Activated CD4-positive, alpha-beta T cell treated with anti-CD3 and anti-CD28 coated beads for 36 hours (primary cell): ENCODE measurements at regions of chr9 and their contacts with region 1.

Region 1: DNA sequence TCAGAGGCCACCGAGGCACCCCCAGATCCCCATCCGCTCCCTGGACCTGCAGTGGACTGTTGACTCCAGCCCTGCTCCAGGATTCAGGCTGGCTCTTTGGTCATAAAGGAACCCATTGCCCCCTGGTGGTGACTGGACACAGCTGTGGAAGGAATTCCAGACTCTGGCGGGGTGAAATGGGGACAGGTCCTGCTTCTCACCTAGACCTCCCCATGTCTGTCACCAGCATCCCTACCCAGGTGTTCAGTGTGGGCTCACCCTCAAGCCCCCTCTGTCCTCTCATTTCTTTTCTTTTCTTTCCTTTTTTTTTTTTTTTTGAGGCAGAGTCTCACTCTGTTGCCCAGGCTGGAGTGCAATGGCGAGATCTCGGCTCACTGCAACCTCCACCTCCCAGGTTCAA is 25.5 kb upstream of the STXBP1 start:
- DNase-seq: peak; percentile 75
- ATAC-seq: peak; percentile 74
- H3K4me3 Mint-ChIP-seq: no peak overlapping the region
- H3K27ac Mint-ChIP-seq: no peak overlapping the region
- H3K4me1 Mint-ChIP-seq: peaks cover 4% of the 10 kb centered on the region
- H3K27me3 Mint-ChIP-seq: peaks cover 15% of the 10 kb centered on the region

Region 2: DNA sequence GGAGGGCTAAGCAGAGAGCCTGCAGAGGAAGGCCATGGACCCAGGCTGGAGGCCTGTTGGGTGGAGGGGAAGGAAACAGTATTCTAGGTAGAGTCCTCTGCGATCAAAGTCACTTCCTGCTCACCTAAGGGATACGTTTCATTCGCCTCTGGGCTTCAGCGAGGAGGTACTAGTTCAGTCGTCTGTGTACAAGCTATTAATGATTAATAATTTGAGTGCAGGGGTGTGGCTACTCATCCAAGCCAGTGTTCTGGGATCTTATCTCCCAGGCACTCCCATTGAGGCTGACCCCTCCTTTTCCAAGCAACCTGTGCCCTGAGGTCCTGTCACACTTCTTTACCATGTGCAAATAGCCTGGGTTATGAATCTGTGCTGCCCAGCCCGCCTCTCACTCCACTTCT is 646.7 kb before region 1 on chr9:
- CTCF ChIA-PET with region 1: no interaction called
- POLR2A ChIA-PET with region 1: no interaction called
- intact Hi-C with region 1: loop called in 1 of 2 experiments (anchors 2 kb)
- DNase-seq: no peak
- ATAC-seq: no peak
- H3K4me3 Mint-ChIP-seq: no peak overlapping the region
- H3K27ac Mint-ChIP-seq: no peak overlapping the region
- H3K4me1 Mint-ChIP-seq: peaks cover 4% of the 10 kb centered on the region
- H3K27me3 Mint-ChIP-seq: peaks cover 16% of the 10 kb centered on the region

Region 3: GRCh38 chr9:127503947-127504782 is 82.4 kb before region 1 on chr9:
- CTCF ChIA-PET with region 1: interaction called, 12 read pairs
- POLR2A ChIA-PET with region 1: no interaction called
- intact Hi-C with region 1: loop called (anchors 1 kb)
- DNase-seq: peak; percentile 89
- ATAC-seq: peak; percentile 90
- H3K4me3 Mint-ChIP-seq: no peak overlapping the region
- H3K27ac Mint-ChIP-seq: no peak overlapping the region
- H3K4me1 Mint-ChIP-seq: no peaks in the 10 kb centered on the region
- H3K27me3 Mint-ChIP-seq: no peaks in the 10 kb centered on the region

Region 4: GRCh38 chr9:127523312-127523851 is 63.2 kb before region 1 on chr9:
- CTCF ChIA-PET with region 1: interaction called, 5 read pairs
- POLR2A ChIA-PET with region 1: no interaction called
- intact Hi-C with region 1: loop called in 1 of 2 experiments (anchors 1 kb)
- DNase-seq: peak; percentile 64
- ATAC-seq: no peak
- H3K4me3 Mint-ChIP-seq: no peak overlapping the region
- H3K27ac Mint-ChIP-seq: no peak overlapping the region
- H3K4me1 Mint-ChIP-seq: peaks cover 2% of the 10 kb centered on the region
- H3K27me3 Mint-ChIP-seq: no peaks in the 10 kb centered on the region

Region 5: GRCh38 chr9:127869310-127870152 is 283.0 kb after region 1 on chr9:
- CTCF ChIA-PET with region 1: no interaction called
- POLR2A ChIA-PET with region 1: no interaction called
- intact Hi-C with region 1: loop called (anchors 1 to 5 kb)
- DNase-seq: peak; percentile 91
- ATAC-seq: peak; percentile 75
- H3K4me3 Mint-ChIP-seq: no peak overlapping the region
- H3K27ac Mint-ChIP-seq: no peak overlapping the region
- H3K4me1 Mint-ChIP-seq: peaks cover 16% of the 10 kb centered on the region
- H3K27me3 Mint-ChIP-seq: no peaks in the 10 kb centered on the region